ENCODE measurements at regions of chr5 and their contacts with region 1.

Region 1: GRCh38 chr5:9513827-9514226 is 32.0 kb downstream of the SEMA5A start:
- DNase-seq: no peak
- H3K4me3 ChIP-seq: no peak overlapping the region
- H3K27ac ChIP-seq: no peak overlapping the region
- H3K4me1 ChIP-seq: no peaks in the 10 kb centered on the region
- H3K27me3 ChIP-seq: no peaks in the 10 kb centered on the region
- CTCF ChIP-seq: peak in 2 of 3 experiments; percentile 44 to 48; a peak in 2 of 4 replicates
- EP300 ChIP-seq: no peak
- POLR2A ChIP-seq: no peak
- RAD21 ChIP-seq: peak; percentile 43 to 53; a peak in 3 of 4 replicates

Region 2: DNA sequence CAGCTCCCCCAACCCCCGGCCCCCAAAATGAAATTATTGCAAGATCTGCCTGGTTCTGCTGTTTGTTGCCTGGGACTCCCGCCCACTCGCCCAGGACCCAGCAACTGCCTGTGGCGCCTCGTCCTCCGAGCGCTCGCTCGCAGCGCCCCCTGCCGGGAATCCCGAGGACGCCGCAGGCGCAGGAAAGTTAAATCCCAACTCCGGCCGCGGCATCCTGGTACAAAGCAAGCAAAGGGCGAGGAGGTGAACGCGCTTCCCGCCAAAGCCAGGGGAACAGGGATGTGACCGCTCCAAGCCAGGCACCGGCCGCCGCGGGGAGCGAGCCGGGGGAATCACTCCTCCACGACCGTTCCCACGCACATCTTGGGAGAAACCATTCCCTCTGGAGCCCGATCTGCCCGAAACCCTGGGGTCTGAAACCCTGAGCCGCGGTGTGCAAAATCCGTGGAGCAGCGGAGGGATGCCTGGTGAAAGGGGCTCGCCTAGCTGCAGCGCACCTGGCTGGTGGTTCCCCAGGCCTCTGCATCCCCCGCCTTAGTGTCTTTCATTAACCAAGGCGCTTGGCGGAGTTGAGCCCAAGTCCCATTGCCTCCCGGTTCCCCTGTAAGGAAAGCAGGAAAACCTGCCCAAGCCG is 30.8 kb after region 1 on chr5:
- CTCF ChIA-PET with region 1: interaction called, 17 read pairs
- POLR2A ChIA-PET with region 1: no interaction called
- DNase-seq: peak in 1 of 2 experiments; percentile 95
- H3K4me3 ChIP-seq: peak overlapping the region; percentile 59 to 88 (median 83)
- H3K27ac ChIP-seq: no peak overlapping the region
- H3K4me1 ChIP-seq: peaks cover 3 to 8% (median 4%) of the 10 kb centered on the region in 4 experiments; a peak in 6 of 7 replicates
- H3K27me3 ChIP-seq: peaks cover 0 to 3% (median 0%) of the 10 kb centered on the region in 4 experiments; a peak in 2 of 7 replicates
- CTCF ChIP-seq: peak; percentile 75 to 95 (median 84)
- EP300 ChIP-seq: peak in 1 of 2 experiments; percentile 81; a peak in 1 of 3 replicates
- POLR2A ChIP-seq: peak in 1 of 2 experiments; percentile 87; a peak in 2 of 3 replicates
- RAD21 ChIP-seq: peak; percentile 87 to 90

Measured in H1 (cell line).